Gastrocnemius medialis (tissue), 4 donors: ENCODE measurements at regions of chr1 and their contacts with region 1.

Region 1: GRCh38 chr1:19981507-19982312 is 2.3 kb upstream of the PLA2G2A start:
- DNase-seq: no peak
- ATAC-seq: no peak
- H3K4me3 ChIP-seq: no peak overlapping the region
- H3K27ac ChIP-seq: no peak overlapping the region
- H3K4me1 ChIP-seq: no peaks in the 10 kb centered on the region
- H3K27me3 ChIP-seq: peaks cover 0 to 3% (median 0%) of the 10 kb centered on the region in 3 donors
- CTCF ChIP-seq: no peak
- POLR2A ChIP-seq: no peak

Region 2: DNA sequence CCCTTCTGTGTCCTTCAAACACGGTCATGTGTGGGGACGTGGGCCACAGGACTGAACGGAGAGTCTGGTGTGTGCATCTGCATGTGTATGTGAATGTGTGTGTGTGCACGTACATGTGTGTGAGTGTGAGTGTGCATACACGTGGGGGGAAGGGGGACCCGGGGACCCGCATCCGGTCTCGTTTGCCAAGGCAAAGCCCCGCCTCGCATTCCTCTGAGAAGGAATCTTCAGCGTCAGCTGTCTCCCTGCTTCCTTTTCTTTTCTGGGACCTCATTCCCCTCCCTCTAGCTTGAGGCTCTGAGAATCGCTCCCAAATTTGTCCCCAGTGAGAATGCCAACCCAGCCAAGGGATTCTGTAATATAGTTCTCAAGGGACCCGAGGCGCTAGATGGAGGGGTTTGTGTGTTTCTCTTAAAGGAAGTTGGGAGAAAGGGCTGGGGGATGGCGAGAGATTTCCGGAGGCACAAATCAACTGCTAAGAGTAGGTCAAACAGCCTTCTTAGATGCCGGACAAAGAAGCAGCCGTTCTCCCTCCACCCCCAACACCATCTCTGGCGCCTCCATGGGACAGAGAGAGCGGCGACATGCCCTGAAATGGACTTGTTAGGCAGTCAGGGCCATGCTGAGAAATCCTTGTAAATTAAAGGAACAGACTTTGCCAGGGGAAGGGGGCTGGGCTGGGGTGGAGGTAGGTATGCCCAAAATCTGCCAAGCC is 1031.9 kb before region 1 on chr1:
- in situ Hi-C with region 1: no loop called
- intact Hi-C with region 1: no loop called
- DNase-seq: no peak
- ATAC-seq: peak; percentile 42 to 45
- H3K4me3 ChIP-seq: peak overlapping the region; percentile 37 to 44 (median 38)
- H3K27ac ChIP-seq: peak overlapping the region; percentile 77 to 84 (median 81)
- H3K4me1 ChIP-seq: peaks cover 52 to 60% of the 10 kb centered on the region in 2 donors
- H3K27me3 ChIP-seq: no peaks in the 10 kb centered on the region
- CTCF ChIP-seq: peak in 3 of 5 experiments; percentile 16 to 24 (median 18)
- POLR2A ChIP-seq: no peak

Region 3: DNA sequence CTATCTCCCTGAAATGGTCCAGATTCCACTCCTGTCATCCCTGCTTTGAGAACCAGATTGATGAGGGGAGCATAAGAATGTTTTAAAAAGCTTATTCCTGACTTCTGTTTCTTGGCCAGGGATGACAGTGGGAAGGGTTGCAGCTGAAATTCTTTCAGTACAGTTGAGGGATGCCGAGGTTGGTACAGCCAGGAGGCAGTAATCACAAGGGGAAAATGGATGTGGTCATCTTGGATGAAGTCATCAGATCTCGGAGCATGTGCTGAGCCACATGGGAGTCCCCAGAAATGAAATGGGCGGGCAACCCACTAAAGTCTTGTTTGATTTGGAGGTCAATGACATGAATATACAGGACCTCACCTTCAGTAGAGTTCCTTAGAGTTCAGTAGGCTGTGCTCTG is 39.6 kb before region 1 on chr1:
- in situ Hi-C with region 1: no loop called
- intact Hi-C with region 1: no loop called
- DNase-seq: no peak
- ATAC-seq: no peak
- H3K4me3 ChIP-seq: no peak overlapping the region
- H3K27ac ChIP-seq: no peak overlapping the region
- H3K4me1 ChIP-seq: no peaks in the 10 kb centered on the region
- H3K27me3 ChIP-seq: no peaks in the 10 kb centered on the region
- CTCF ChIP-seq: no peak
- POLR2A ChIP-seq: no peak

Region 4: DNA sequence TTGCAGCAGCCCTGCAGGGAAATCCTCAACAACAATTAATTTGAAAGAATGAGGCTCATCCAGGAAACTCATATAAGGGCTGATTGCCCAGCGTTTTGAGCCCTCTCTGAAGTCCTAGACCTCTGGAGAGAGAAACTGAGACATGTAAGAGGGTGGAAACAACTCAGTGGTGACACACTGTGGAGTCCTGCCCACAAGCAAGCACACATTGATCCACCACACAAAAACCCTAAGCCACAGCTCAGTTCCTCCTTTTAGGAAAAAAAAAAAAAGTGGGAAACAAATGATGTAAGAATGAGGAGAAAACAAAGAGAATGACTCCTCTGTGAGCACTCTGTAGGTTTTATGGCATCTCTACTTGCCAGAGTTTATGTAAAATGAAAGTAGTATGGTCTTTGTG is 65.4 kb after region 1 on chr1:
- in situ Hi-C with region 1: loop called in 1 of 4 experiments (anchors 10 kb)
- intact Hi-C with region 1: no loop called
- DNase-seq: no peak
- ATAC-seq: no peak
- H3K4me3 ChIP-seq: no peak overlapping the region
- H3K27ac ChIP-seq: no peak overlapping the region
- H3K4me1 ChIP-seq: no peaks in the 10 kb centered on the region
- H3K27me3 ChIP-seq: peaks cover 0 to 3% (median 0%) of the 10 kb centered on the region in 3 donors
- CTCF ChIP-seq: no peak
- POLR2A ChIP-seq: no peak